ENCODE measurements at regions of chr16 and their contacts with region 1.

Region 1: GRCh38 chr16:71358464-71358998 is at the start of gene CALB2:
- DNase-seq: peak; percentile 46 to 58
- ATAC-seq: peak; percentile 77 to 93
- H3K4me3 ChIP-seq: peak within 1 kb of the TSS; percentile 36
- H3K27ac ChIP-seq: peak within 1 kb of the TSS; percentile 49 to 74; a peak in 5 of 6 replicates
- H3K4me1 ChIP-seq: peaks cover 30% of the 10 kb centered on the region
- CTCF ChIP-seq: peak; percentile 97
- EP300 ChIP-seq: no peak
- POLR2A ChIP-seq: no peak
- RAD21 ChIP-seq: peak; percentile 81 to 94
- polyA plus RNA-seq, gene CALB2: 2.3 and 3.7 TPM in 2 replicates

Region 2: DNA sequence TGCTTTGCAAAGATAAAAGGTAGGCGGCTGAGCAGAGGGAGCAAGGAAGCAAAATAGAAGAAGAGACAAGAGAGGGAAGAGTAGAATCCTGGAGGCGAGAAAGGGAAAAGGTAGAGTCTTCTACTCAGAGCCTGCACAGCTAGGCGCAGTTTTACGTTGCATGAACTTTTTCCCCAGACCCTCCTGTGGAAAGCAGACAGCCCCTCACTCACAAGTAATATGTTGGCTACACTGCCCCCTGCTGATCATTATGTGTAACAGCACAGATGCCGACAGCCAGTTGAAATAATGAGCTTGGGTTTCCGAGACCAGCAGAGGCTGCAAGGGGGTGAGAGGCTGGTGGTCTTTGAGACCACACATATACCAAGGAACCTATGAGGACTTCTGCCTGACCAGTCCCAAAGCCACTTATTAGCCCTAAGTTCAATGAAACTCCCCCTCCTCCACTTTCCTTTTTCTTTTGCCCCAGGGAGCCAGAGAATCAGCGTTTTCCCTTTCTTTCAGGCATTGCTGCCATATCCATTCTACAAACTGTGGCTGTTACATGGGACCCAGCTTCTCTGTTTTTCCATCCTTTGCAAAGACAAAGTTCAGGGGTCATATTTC is 46.9 kb before region 1 on chr16:
- CTCF ChIA-PET with region 1: interaction called, 10 read pairs
- POLR2A ChIA-PET with region 1: no interaction called
- DNase-seq: peak; percentile 13 to 17
- ATAC-seq: peak in 1 of 2 experiments; percentile 47; a peak in 4 of 6 replicates
- H3K4me3 ChIP-seq: no peak overlapping the region
- H3K27ac ChIP-seq: no peak overlapping the region
- H3K4me1 ChIP-seq: no peaks in the 10 kb centered on the region
- CTCF ChIP-seq: peak; percentile 63
- EP300 ChIP-seq: no peak
- POLR2A ChIP-seq: no peak
- RAD21 ChIP-seq: peak; percentile 54 to 64

Region 3: DNA sequence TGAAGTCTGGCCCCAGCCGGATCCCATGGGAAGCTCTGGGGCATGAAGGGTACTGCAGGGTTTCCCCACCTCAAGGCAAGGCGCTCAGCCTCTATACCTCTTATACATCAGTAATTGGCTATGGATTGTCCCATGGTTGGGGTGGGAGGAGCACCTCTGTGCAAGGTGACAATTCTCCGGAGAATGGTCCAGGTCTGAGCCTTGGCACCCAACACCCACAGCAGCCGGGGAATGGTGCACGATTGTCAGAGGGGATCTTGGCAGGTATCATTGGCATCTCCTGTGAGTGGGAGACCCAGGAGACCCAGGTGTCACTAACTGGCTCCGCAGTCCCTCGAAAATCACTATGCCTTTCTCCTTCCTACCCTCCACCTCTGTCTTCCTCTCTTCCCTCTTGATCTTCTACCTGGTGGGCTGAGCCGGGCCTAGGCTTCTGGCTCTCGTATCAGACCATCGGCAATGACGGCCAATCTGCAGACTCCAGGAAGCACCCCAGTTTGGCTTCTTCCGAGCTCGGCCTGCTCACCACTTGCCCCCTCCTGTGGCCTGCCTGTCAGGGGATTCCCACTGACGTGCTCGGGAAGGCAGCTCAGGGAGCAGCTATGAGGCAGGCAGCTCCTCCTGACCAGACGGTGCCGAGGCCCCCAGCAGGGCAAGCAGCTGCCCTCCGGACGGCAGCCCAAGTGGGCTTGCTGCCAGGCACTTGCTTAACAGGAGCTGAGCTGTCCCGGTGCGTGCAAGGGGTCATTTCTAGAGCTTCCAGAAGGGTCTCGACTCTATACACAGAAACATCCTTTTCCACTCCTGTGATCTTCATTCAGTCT is 10.1 kb before region 1 on chr16:
- CTCF ChIA-PET with region 1: interaction called, 33 read pairs
- POLR2A ChIA-PET with region 1: no interaction called
- DNase-seq: no peak
- ATAC-seq: no peak
- H3K4me3 ChIP-seq: no peak overlapping the region
- H3K27ac ChIP-seq: no peak overlapping the region
- H3K4me1 ChIP-seq: no peaks in the 10 kb centered on the region
- CTCF ChIP-seq: no peak
- EP300 ChIP-seq: no peak
- POLR2A ChIP-seq: no peak
- RAD21 ChIP-seq: no peak

Measured in A549 (cell line).